CD4-positive, alpha-beta memory T cell (primary cell): ENCODE measurements at regions of chr13 and their contacts with region 1.

Region 1: GRCh38 chr13:26186118-26186870 is 35.8 kb downstream of the RNF6 start:
- DNase-seq: peak; percentile 88 to 93 (median 91)
- H3K4me3 ChIP-seq: peak overlapping the region; percentile 80 to 82
- H3K4me3 Mint-ChIP-seq: peak overlapping the region; percentile 89 to 99 (median 94)
- H3K27ac ChIP-seq: peak overlapping the region; percentile 60
- H3K27ac Mint-ChIP-seq: peak overlapping the region; percentile 91 to 98 (median 96)
- H3K4me1 ChIP-seq: peaks cover 18% of the 10 kb centered on the region
- H3K4me1 Mint-ChIP-seq: peaks cover 12 to 33% (median 27%) of the 10 kb centered on the region in 4 donors
- H3K27me3 ChIP-seq: no peaks in the 10 kb centered on the region
- H3K27me3 Mint-ChIP-seq: no peaks in the 10 kb centered on the region

Region 2: GRCh38 chr13:26202365-26202972 is 16.2 kb after region 1 on chr13:
- CTCF ChIA-PET with region 1: interaction called, 35 read pairs
- POLR2A ChIA-PET with region 1: interaction called, 3 read pairs
- intact Hi-C with region 1: no loop called
- DNase-seq: no peak
- H3K4me3 ChIP-seq: no peak overlapping the region
- H3K4me3 Mint-ChIP-seq: no peak overlapping the region
- H3K27ac ChIP-seq: no peak overlapping the region
- H3K27ac Mint-ChIP-seq: no peak overlapping the region
- H3K4me1 ChIP-seq: no peaks in the 10 kb centered on the region
- H3K4me1 Mint-ChIP-seq: peaks cover 0 to 5% (median 1%) of the 10 kb centered on the region in 4 donors
- H3K27me3 ChIP-seq: no peaks in the 10 kb centered on the region
- H3K27me3 Mint-ChIP-seq: no peaks in the 10 kb centered on the region

Region 3: DNA sequence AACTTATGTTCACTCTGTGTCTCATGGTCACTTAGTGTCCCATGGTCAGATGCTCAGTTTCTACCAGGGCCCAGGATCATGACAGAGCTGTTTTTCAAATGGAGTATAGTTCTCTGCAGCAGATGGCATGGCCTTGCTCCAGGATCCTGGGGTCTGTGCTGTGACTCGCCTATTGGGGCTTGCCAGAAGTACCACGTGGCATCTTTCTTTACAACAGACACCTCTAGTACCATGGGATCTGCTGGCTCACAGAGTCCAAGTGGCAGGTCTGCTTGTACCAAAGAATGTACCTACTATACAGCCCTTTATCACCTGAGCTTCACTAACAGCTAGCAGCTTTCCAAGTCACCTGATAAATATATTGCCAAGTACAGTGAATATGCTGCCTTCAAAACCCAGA is 41.8 kb after region 1 on chr13:
- CTCF ChIA-PET with region 1: interaction called, 20 read pairs
- POLR2A ChIA-PET with region 1: interaction called, 63 read pairs
- intact Hi-C with region 1: no loop called
- DNase-seq: no peak
- H3K4me3 ChIP-seq: no peak overlapping the region
- H3K4me3 Mint-ChIP-seq: no peak overlapping the region
- H3K27ac ChIP-seq: no peak overlapping the region
- H3K27ac Mint-ChIP-seq: no peak overlapping the region
- H3K4me1 ChIP-seq: no peaks in the 10 kb centered on the region
- H3K4me1 Mint-ChIP-seq: peaks cover 3 to 5% (median 5%) of the 10 kb centered on the region in 4 donors
- H3K27me3 ChIP-seq: no peaks in the 10 kb centered on the region
- H3K27me3 Mint-ChIP-seq: peaks cover 0 to 10% of the 10 kb centered on the region in 2 donors

Region 4: DNA sequence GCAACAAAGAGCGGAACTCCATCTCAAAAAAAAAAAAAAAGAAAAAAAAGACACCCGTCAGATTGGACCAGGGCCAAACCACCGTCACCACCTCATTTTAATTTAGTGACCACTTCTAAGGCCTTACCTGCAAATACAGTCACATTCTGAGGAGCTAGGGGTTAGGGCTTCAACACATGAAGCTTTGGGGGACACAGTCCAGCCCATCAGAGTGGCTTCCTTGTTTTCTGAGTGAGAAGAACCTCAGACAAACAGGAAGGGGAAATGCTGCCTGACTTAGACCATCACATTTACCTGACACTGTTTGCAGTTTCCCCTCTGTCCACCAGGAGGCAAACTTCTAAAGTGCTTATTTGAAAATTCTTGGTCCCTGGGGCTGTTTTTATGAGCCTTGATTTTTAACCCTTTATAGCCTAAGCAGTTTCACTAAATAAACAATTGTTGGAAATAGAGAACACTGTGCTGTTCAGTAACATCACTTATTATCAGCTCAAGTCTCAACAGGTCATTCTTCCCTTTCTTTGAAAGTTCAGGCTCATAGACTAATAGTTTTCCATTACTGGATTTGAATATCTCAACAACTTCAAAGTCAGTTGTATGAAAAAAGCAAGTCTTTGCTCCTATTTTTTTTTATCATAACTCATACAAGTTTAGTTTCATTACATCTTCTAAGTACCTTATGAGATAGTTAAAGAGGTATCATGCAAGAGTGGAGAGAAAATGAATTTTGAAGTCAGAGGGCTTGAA is 296.3 kb after region 1 on chr13:
- CTCF ChIA-PET with region 1: interaction called, 44 read pairs
- POLR2A ChIA-PET with region 1: interaction called, 6 read pairs
- intact Hi-C with region 1: loop called (anchors 1 kb)
- DNase-seq: peak; percentile 70 to 85 (median 77)
- H3K4me3 ChIP-seq: no peak overlapping the region
- H3K4me3 Mint-ChIP-seq: peak overlapping the region; percentile 21 to 66 (median 61)
- H3K27ac ChIP-seq: no peak overlapping the region
- H3K27ac Mint-ChIP-seq: peak overlapping the region; percentile 57 to 88 (median 83)
- H3K4me1 ChIP-seq: peaks cover 22% of the 10 kb centered on the region
- H3K4me1 Mint-ChIP-seq: peaks cover 4 to 23% (median 12%) of the 10 kb centered on the region in 4 donors
- H3K27me3 ChIP-seq: no peaks in the 10 kb centered on the region
- H3K27me3 Mint-ChIP-seq: no peaks in the 10 kb centered on the region

Region 5: GRCh38 chr13:26502826-26503225 is 316.5 kb after region 1 on chr13:
- CTCF ChIA-PET with region 1: interaction called, 282 read pairs
- POLR2A ChIA-PET with region 1: no interaction called
- intact Hi-C with region 1: no loop called
- DNase-seq: no peak
- H3K4me3 ChIP-seq: no peak overlapping the region
- H3K4me3 Mint-ChIP-seq: peak overlapping the region in 2 of 8 donors; percentile 37 to 60
- H3K27ac ChIP-seq: no peak overlapping the region
- H3K27ac Mint-ChIP-seq: no peak overlapping the region
- H3K4me1 ChIP-seq: no peaks in the 10 kb centered on the region
- H3K4me1 Mint-ChIP-seq: peaks cover 0 to 5% (median 2%) of the 10 kb centered on the region in 4 donors
- H3K27me3 ChIP-seq: no peaks in the 10 kb centered on the region
- H3K27me3 Mint-ChIP-seq: peaks cover 3 to 6% of the 10 kb centered on the region in 2 donors

Region 6: GRCh38 chr13:26872525-26873385 is 686.5 kb after region 1 on chr13:
- CTCF ChIA-PET with region 1: interaction called, 3 read pairs
- POLR2A ChIA-PET with region 1: no interaction called
- intact Hi-C with region 1: loop called (anchors 5 kb)
- DNase-seq: peak in 4 of 5 donors; percentile 16 to 32 (median 26)
- H3K4me3 ChIP-seq: no peak overlapping the region
- H3K4me3 Mint-ChIP-seq: no peak overlapping the region
- H3K27ac ChIP-seq: no peak overlapping the region
- H3K27ac Mint-ChIP-seq: no peak overlapping the region
- H3K4me1 ChIP-seq: no peaks in the 10 kb centered on the region
- H3K4me1 Mint-ChIP-seq: no peaks in the 10 kb centered on the region
- H3K27me3 ChIP-seq: no peaks in the 10 kb centered on the region
- H3K27me3 Mint-ChIP-seq: peaks cover 5 to 8% of the 10 kb centered on the region in 2 donors